Activated B cell treated with CpG ODN at 0.5 μM for 24 hours (primary cell): ENCODE measurements at regions of chr1 and their contacts with region 1.

Region 1: DNA sequence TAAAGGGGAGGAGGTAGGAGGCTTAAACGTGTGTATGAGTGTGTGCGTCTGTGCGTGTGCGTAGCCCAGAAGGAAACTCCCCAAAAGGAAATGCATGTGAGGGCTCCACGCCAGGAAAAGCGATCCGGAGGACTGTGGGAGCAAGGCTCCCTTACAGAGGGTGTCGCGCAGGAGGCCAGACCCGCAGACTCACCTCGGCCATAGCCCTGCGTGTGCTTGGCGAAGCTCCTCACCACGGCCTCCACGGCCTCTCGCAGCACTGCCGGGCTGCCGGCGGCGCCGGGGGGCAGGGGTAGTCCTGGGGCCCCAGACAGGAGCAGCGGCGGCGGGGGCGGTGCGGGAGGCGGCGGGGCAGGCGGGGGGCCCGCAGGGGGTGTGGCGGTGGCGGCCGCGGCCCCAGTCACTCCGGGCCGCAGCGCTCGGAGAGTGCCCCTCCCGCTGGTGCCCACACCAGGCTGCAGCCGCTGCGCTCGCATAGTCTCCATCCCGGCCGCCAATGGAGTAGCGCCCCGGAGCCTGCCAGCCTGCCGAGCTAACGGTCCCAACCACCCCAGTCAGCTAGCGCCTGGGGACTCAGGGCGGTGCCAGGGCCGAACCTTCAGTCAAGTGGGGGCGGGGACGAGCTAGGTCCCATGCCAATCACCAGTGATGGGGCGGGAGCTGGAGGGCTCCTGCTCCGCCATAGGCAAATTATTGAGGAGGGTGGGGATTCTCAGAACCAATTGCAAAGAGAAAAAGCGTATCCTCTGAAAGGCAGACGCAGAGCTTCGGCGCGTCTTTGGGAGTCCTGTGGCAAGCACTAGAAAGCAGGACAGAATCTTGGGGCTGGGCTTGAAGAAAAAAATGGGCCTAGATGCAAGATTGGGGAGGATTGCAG is at the start of gene LIX1L:
- DNase-seq: peak; percentile 87
- ATAC-seq: peak; percentile 89
- H3K4me3 Mint-ChIP-seq: peak within 1 kb of the TSS; percentile 96
- H3K27ac Mint-ChIP-seq: peak within 1 kb of the TSS; percentile 94
- H3K4me1 Mint-ChIP-seq: peaks cover 64% of the 10 kb centered on the region
- H3K27me3 Mint-ChIP-seq: no peaks in the 10 kb centered on the region
- CTCF ChIP-seq: no peak
- total RNA-seq, gene LIX1L: 30.1 and 31.7 TPM in 2 replicates

Region 2: DNA sequence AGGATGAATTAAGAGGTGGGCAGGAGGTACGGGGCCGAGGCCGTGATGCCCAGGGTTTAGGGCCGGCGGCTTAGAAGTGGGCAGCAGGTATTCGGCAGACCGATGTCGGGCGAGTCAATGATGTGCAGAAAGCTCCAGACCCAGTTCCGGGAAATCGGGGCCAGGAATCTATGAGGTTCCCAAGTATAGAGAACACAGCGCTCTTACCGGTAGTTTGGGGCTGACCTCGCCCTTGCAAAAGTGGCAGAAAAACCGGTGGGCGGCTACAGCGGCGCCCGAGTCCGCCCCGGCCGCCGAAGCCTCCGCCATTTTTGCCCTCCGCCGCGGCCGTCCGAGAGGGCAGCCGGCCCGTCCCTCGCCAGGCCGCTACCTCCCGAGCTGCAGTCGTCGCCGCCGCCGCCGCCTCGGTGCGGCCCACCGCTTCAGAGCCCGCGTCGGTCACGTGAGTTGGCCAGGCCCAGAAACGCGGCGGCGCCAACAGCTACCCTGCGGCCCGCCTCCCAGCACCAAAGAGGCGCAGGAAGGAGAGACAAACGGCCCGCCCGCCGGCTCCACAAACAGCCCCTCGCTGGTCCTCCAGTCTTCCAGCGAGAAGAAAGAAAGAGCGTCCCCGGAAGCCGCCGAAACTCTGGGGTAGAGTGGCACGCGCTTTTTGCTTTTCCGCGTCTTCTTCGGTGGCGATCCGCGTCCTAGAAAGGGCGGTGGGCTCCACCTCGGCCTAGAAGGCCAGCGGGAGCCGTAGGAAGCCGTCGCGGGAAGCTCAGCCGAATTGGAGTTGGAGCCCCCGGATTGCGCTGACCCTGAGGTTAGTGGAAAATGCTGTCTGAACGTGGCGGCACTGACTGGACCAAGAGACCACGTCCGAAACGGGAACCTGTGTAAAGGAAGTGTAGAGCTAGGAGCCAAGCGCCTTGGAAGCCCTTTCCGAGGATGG is 133.8 kb before region 1 on chr1 and contains the starts of genes POLR3C and RNF115:
- CTCF ChIA-PET with region 1: no interaction called
- POLR2A ChIA-PET with region 1: interaction called, 11 read pairs
- intact Hi-C with region 1: no loop called
- DNase-seq: peak; percentile 80
- ATAC-seq: peak; percentile 95
- H3K4me3 Mint-ChIP-seq: peak within 1 kb of the TSS; percentile 97
- H3K27ac Mint-ChIP-seq: peak within 1 kb of the TSS; percentile 94
- H3K4me1 Mint-ChIP-seq: peaks cover 25% of the 10 kb centered on the region
- H3K27me3 Mint-ChIP-seq: no peaks in the 10 kb centered on the region
- CTCF ChIP-seq: no peak
- total RNA-seq, gene POLR3C: 43.7 and 51.2 TPM in 2 replicates
- total RNA-seq, gene RNF115: 15.3 and 19.7 TPM in 2 replicates

Region 3: DNA sequence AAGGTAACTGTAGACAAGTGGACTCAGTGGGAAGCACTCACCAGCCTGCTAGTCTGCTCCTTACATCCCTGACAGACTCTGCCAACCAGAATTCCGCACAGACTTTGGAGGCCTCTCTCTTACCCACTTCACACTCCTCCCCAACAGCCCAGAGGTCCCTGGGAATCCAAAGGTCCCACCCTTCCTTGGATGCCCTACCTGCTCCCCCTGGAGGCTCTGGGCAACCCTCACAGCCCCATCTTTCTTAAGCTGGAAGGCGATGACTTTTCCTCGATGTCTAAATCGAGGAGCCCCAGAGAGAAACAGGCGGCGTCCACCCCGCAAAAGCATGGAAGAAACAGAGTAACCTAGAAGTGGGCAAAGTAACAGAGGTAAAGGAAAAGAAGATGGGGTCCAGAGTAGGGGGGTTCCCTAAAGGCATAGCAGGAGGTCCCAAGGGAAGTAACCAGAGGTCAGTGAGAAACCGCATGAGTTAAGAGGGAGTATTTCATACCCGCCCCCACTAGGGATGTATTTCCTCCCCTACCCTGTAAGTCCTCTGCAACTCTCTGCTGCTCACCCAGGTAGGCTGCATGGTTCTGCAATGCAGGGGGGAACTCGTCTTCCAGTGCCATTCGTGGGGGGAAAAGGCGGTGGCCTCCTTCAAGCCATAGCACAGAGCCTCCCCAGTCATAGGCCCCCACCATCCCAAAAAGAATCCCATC is 56.2 kb before region 1 on chr1:
- CTCF ChIA-PET with region 1: no interaction called
- POLR2A ChIA-PET with region 1: no interaction called
- intact Hi-C with region 1: no loop called
- DNase-seq: no peak
- ATAC-seq: no peak
- H3K4me3 Mint-ChIP-seq: no peak overlapping the region
- H3K27ac Mint-ChIP-seq: no peak overlapping the region
- H3K4me1 Mint-ChIP-seq: no peaks in the 10 kb centered on the region
- H3K27me3 Mint-ChIP-seq: no peaks in the 10 kb centered on the region
- CTCF ChIP-seq: no peak

Region 4: GRCh38 chr1:145918144-145918992 is 39.3 kb before region 1 on chr1 and contains the start of gene PEX11B:
- CTCF ChIA-PET with region 1: no interaction called
- POLR2A ChIA-PET with region 1: interaction called, 61 read pairs
- intact Hi-C with region 1: loop called (anchors 1 kb)
- DNase-seq: peak; percentile 88
- ATAC-seq: peak; percentile 90
- H3K4me3 Mint-ChIP-seq: peak within 1 kb of the TSS; percentile 95
- H3K27ac Mint-ChIP-seq: peak within 1 kb of the TSS; percentile 93
- H3K4me1 Mint-ChIP-seq: peaks cover 35% of the 10 kb centered on the region
- H3K27me3 Mint-ChIP-seq: no peaks in the 10 kb centered on the region
- CTCF ChIP-seq: no peak
- total RNA-seq, gene PEX11B: 42.7 and 47.7 TPM in 2 replicates

Region 5: DNA sequence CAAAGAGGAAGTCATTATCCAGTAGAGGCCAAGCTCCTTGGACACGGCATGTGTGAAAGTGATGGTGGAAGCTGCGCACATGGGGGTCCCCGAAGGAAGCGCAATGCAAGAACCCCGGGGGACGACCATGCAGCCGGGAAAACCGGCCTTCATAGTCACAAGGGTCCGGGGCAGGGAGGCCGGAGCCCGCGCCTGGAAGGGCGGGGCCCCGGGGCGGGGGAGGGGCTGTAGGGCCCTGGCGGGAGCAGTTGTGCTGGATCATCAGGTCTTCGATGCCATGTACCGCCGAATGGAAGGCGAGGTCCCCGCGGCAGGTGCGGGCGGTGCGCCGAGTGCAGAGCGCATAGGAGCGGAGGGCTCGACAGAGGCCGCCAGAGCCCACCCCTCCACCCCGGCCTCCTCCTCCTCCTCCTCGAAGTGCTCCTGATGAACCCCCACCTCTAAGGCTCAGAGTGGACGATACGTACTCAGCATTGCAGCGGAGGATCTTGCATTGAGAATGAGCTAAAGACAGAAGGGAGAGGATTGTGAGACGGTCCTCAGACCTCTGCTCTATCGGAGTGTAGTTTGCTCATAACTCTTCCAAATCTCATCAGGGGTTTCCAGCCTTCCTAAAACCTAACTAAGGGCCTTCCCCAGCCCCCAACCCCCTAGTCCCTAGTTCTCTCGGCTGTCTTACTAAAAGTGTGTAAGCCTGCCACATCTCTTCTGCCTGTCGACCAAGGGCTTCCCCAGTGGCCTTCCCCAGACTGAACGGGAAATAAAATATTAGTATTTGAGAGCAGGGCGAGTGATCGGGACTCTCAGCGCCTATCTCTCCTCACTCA is 61.8 kb after region 1 on chr1:
- CTCF ChIA-PET with region 1: no interaction called
- POLR2A ChIA-PET with region 1: no interaction called
- intact Hi-C with region 1: no loop called
- DNase-seq: no peak
- ATAC-seq: peak; percentile 18
- H3K4me3 Mint-ChIP-seq: peak overlapping the region; percentile 71
- H3K27ac Mint-ChIP-seq: no peak overlapping the region
- H3K4me1 Mint-ChIP-seq: peaks cover 8% of the 10 kb centered on the region
- H3K27me3 Mint-ChIP-seq: peaks cover 45% of the 10 kb centered on the region
- CTCF ChIP-seq: no peak

Region 6: GRCh38 chr1:146036965-146037646 is 79.4 kb after region 1 on chr1:
- CTCF ChIA-PET with region 1: interaction called, 3 read pairs
- POLR2A ChIA-PET with region 1: interaction called, 59 read pairs
- intact Hi-C with region 1: no loop called
- DNase-seq: peak; percentile 61
- ATAC-seq: peak; percentile 56
- H3K4me3 Mint-ChIP-seq: peak overlapping the region; percentile 99
- H3K27ac Mint-ChIP-seq: peak overlapping the region; percentile 98
- H3K4me1 Mint-ChIP-seq: peaks cover 43% of the 10 kb centered on the region
- H3K27me3 Mint-ChIP-seq: peaks cover 2% of the 10 kb centered on the region
- CTCF ChIP-seq: no peak

Region 7: GRCh38 chr1:147337040-147337630 is 1379.5 kb after region 1 on chr1:
- CTCF ChIA-PET with region 1: no interaction called
- POLR2A ChIA-PET with region 1: no interaction called
- intact Hi-C with region 1: no loop called
- DNase-seq: no peak
- ATAC-seq: no peak
- H3K4me3 Mint-ChIP-seq: no peak overlapping the region
- H3K27ac Mint-ChIP-seq: no peak overlapping the region
- H3K4me1 Mint-ChIP-seq: no peaks in the 10 kb centered on the region
- H3K27me3 Mint-ChIP-seq: peaks cover 9% of the 10 kb centered on the region
- CTCF ChIP-seq: no peak